ENCODE measurements at regions of chr4 and their contacts with region 1.

Region 1: GRCh38 chr4:73874386-73874785 is 5.2 kb downstream of the CXCL1 start:
- DNase-seq: no peak
- CTCF ChIP-seq: no peak

Region 2: DNA sequence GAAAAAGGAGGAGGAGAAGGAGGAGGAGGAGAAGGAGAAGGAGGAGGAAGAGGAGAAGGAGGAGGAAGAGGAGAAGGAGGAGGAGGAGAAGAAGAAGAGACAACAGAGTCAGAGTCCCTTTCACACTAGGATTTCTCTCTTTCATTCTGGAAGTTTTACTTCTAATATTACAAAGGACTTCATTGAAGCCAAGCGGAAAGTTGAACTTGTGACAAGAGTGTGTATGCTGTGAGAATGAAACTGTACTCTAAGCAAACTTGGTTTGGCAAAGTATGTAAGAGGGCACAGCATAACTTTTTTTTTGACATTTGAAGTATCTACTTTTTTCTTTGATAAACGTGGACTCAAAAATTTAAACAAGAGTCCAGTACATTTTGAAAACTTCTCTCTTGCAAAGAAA is 86.0 kb before region 1 on chr4:
- CTCF ChIA-PET with region 1: no interaction called
- POLR2A ChIA-PET with region 1: no interaction called
- DNase-seq: no peak
- CTCF ChIP-seq: no peak

Region 3: GRCh38 chr4:73864365-73864764 is 10.0 kb before region 1 on chr4:
- CTCF ChIA-PET with region 1: interaction called, 10 read pairs
- POLR2A ChIA-PET with region 1: no interaction called
- DNase-seq: peak; percentile 15
- CTCF ChIP-seq: peak; percentile 51

Region 4: DNA sequence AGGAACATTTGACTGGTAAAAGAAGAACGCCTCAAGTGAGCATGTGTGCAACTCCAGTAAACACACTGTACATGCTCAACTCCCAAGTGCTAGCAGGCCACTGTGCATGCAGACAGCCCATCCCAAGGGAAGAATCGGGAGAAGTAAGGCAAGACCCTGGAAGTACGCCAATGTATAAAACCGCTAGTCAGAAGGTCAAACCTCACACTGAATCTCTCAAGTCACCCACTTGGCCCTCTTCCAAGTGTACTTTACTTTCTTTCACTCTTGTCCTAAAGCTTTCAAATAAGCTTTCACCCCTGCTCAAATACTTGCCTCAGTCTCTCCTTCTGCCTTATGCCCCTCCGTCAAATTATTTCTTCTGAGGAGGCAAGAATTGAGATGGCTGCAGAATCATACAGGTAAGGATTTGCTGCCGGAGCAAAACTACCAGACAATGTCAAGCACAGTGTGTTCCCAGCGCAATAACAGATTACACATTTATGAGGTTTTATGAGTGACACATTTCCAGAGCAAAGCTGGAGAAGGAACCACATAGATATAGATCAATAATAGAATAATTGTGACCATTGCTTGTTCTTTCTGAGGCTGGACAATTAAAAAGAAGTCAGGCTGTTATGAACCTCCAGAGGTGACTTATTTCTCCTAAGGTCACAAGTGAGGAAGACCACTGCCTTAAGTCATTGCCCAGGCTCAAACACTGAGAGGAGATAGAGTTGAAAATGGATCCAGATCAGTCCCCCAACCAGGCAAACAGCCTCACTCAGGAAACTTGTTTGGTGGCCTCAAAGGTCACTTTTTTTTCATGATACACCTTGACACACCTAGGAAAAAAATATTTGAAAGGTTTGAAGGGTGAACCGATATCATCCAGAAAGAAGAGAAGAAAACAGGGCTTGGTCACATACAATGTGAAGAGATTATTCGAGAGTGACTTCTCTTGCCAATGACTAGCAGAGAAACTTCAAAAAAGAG is 21.1 kb after region 1 on chr4:
- CTCF ChIA-PET with region 1: no interaction called
- POLR2A ChIA-PET with region 1: no interaction called
- DNase-seq: no peak
- CTCF ChIP-seq: no peak

Measured in GM10248 (cell line).